HepG2 (cell line): ENCODE measurements at regions of chr10 and their contacts with region 1.

Region 1: DNA sequence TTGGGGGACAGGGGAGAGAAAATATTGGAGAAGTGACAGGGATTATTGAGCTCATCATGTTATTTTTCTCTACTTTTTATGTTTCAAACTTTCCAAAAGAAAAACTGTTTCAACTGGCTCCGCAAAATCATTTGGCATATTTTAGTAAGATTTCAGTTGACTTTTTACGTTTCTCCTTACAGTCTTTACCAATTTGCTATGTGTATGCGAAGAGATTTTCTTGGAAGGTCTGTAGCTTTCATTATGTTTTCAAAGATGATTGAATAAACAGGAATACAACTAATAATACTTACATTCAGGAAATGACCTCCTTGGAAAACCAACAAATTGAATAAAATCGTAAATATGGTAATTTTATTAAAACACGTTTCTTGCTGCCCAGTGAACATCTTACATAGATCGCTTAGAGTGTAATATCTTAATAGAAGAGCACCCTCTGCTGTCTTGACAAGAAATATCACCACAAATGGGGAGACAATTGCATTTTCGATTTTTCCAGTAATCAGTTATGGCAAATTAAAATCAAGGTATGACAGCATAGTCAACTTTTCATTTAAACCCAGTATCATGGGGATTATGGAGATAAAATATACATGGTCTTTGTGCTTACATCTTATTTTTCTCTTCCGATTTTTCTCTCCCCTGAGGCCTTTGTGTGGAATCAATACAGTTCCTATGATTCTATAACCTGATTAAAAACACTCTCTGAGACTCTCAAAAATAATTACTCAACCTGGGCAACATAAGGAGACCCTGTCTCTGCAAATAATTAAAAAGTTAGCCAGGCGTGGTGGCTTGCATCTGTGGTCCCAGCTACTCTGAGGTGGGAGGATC is 43.1 kb downstream of the MBL2 start:
- DNase-seq: peak; percentile 12
- ATAC-seq: peak; percentile 54; the same call in 2 of the 3 replicates
- H3K4me3 ChIP-seq: no peak overlapping the region
- H3K27ac ChIP-seq: no peak overlapping the region
- H3K4me1 ChIP-seq: no peaks in the 10 kb centered on the region
- H3K27me3 ChIP-seq: no peaks in the 10 kb centered on the region
- CTCF ChIP-seq: peak; percentile 65
- EP300 ChIP-seq: no peak
- POLR2A ChIP-seq: no peak
- RAD21 ChIP-seq: no peak

Region 2: GRCh38 chr10:52644373-52645186 is 84.9 kb before region 1 on chr10:
- CTCF ChIA-PET with region 1: interaction called, 28 read pairs
- POLR2A ChIA-PET with region 1: no interaction called
- in situ Hi-C with region 1: loop called (anchors 10 kb)
- intact Hi-C with region 1: loop called (anchors 1 kb)
- DNase-seq: peak; percentile 48
- ATAC-seq: peak; percentile 78
- H3K4me3 ChIP-seq: no peak overlapping the region
- H3K27ac ChIP-seq: no peak overlapping the region
- H3K4me1 ChIP-seq: peaks cover 23% of the 10 kb centered on the region
- H3K27me3 ChIP-seq: no peaks in the 10 kb centered on the region
- CTCF ChIP-seq: peak; percentile 79
- EP300 ChIP-seq: no peak
- POLR2A ChIP-seq: no peak
- RAD21 ChIP-seq: peak; percentile 70